HEK293 (cell line): ENCODE measurements at regions of chr14 and their contacts with region 1.

Region 1: DNA sequence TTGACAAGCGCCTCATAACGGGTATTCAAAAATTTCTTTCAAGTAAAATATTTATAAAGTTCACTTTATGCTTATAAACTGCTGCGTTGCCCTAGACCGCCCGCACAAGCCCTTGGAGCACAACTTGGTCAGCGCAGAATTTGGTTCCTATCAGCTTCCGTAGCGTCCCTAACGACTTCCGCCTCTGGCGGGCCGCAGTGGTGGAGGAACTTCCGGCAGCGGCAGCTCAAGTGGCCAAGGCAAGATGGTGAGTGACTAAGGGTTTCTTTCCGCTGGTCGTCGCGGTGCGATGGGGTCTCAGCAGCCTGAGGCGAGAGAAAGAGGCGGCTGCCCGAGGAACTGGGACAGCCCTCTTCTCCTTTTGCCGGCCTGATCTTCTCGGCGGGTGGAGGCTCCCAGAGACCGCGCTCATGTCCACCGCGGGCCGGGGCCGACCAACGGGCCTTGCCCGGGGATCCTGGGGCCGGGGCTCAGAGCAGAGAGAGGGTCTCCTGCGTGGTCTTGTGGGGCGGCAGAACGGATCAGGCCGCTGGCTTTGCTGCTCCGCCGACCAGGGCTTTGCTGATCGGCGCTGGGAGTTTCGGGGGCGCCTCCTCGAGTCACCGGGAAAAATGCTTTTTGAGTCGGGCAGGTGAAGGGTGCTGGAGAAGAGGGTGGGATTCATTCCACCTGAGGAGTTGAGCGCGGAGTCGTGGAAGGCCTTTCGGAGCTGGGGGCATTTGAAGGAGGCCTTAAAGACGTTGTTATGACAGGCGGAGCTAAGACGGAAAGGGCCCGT is at the start of gene PSMC1:
- H3K4me3 ChIP-seq: peak within 1 kb of the TSS; percentile 87
- H3K27ac ChIP-seq: peak within 1 kb of the TSS; percentile 74; the same call in 1 of the 2 replicates
- H3K4me1 ChIP-seq: no peaks in the 10 kb centered on the region; the same call in 1 of the 2 replicates
- CTCF ChIP-seq: no peak

Region 2: DNA sequence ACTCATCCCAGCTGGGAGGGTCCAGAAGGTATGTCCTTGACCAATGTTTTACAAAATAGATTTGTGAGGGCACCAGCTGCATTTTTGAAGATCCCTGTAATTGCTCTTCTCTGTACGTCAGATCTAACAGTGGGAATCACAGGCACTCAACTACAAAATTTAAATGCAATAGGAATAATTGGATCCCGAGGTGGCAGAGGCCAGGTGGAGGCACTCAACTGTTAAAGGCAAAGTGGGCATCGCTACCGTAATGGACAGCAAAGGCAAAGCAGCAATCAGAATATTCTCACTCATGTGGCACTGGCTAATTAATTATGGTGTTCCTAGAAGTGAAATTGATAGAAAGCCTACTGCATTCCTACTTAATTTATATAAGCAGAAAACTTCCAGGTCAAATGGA is 28.1 kb before region 1 on chr14:
- CTCF ChIA-PET with region 1: no interaction called
- POLR2A ChIA-PET with region 1: no interaction called
- H3K4me3 ChIP-seq: no peak overlapping the region
- H3K27ac ChIP-seq: no peak overlapping the region
- H3K4me1 ChIP-seq: no peaks in the 10 kb centered on the region
- CTCF ChIP-seq: no peak

Region 3: DNA sequence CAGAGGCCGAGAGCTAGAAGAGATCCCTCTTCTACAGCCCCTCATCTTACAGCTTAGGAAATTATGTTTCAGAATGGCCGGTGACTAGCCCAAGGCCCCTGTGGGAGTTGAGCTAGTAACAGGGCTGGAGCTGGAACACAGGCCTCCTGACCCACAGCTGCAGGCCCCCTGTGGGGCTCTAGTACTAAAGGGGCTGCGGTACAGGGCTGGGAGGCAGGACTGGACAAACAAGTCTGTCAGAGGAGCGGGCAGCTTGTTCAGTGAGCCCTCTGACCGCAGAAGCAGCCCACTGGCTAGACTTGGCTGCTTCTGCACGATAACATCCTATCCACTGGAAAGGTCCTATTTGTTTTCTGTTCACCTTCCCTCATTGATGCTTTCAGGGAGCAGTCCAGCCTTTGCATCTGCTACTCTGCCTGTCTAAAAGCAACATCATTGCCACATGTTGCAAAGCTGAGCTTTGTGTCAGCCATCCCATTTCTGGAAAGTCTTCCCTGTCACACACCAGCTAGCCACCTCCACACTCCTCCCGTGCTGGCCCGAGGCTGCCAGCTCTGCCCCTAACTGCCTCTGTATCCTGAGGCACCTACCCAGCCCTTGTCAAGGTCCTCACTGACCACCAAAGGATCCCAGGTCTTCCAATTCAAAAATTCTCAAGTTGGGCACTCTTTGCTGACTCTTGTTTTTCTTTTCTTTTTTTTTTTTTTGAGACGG is 10.1 kb after region 1 on chr14:
- CTCF ChIA-PET with region 1: no interaction called
- POLR2A ChIA-PET with region 1: interaction called, 10 read pairs
- H3K4me3 ChIP-seq: no peak overlapping the region
- H3K27ac ChIP-seq: no peak overlapping the region
- H3K4me1 ChIP-seq: no peaks in the 10 kb centered on the region
- CTCF ChIP-seq: no peak

Region 4: DNA sequence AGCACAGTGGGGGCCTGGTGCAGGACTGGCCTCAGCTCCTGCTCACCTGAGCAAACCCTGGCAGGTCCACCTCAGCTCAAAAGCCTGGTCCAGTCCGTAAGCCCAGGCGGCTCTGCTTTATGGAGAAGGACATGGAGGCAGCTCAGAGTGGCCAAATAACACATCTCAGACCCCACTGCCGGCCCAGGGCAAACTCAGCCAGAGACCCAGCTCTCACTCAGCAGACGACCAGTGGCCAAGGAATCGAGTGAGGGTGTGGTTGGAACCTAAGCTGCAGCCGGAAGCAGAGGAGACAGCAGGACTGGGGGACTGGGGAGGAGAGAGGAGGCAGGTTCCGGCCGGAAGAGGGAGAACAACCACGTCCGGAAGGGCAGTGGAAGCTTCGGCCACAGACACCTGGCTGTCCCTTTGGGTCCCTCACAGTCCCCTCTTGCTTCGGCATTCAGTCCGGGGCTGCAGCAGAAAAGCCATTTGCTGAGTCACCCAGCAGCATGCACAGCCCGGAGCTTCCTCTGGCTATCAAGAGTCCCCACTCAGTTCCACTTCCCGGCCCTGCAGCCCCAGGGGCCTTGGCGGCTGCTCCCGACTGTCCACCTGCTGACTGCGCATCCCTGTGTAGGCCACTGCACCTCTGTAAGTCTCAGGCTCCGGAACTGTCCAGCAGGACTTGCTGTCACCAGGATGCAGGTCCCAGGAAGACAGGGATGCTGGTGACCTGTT is 244.3 kb after region 1 on chr14:
- CTCF ChIA-PET with region 1: no interaction called
- POLR2A ChIA-PET with region 1: no interaction called
- H3K4me3 ChIP-seq: no peak overlapping the region
- H3K27ac ChIP-seq: no peak overlapping the region
- H3K4me1 ChIP-seq: no peaks in the 10 kb centered on the region
- CTCF ChIP-seq: no peak